Activated CD4-positive, alpha-beta T cell treated with anti-CD3 and anti-CD28 coated beads for 36 hours (primary cell): ENCODE measurements at regions of chr12 and their contacts with region 1.

Region 1: DNA sequence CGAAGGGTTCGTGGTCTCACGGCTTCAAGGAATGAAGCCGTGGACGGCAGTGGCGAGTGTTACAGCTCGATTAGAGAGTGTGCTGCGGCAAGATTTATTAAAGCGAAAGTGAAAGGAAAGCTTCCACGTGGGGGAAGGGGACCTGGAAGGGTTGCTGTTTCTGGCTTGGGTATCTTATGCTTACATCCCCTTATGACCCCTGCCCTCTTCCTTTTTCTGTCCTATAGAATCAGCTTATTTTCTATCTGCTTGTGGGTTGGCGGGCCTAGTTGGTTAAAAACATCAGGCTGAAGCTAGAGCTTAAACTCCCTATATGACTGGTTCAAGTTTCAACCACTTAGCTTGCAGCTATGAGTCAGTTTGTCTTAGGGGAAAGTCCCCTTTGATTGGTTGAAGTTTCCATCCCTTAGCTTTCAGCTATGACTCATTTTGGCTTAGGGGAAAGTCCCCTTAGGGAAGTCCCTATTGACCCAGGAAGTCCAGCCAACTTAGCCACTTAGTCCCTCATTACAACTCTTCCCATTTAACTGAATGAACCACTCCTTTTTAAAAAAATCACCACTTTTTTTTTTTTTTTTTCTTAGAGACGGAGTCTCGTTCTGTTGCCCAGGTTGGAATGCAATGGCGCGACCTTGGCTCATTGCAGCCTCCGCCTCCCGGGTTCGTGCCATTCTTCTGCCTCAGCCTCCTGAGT is 1494.7 kb upstream of the TMEM132C start:
- DNase-seq: peak; percentile 69
- ATAC-seq: peak; percentile 76
- H3K4me3 Mint-ChIP-seq: peak overlapping the region; percentile 73
- H3K27ac Mint-ChIP-seq: peak overlapping the region; percentile 98
- H3K4me1 Mint-ChIP-seq: peaks cover 31% of the 10 kb centered on the region
- H3K27me3 Mint-ChIP-seq: peaks cover 5% of the 10 kb centered on the region

Region 2: GRCh38 chr12:126483145-126484068 is 288.9 kb before region 1 on chr12:
- CTCF ChIA-PET with region 1: no interaction called
- POLR2A ChIA-PET with region 1: no interaction called
- intact Hi-C with region 1: loop called in 1 of 2 experiments (anchors 5 kb)
- DNase-seq: no peak
- ATAC-seq: peak; percentile 42
- H3K4me3 Mint-ChIP-seq: no peak overlapping the region
- H3K27ac Mint-ChIP-seq: no peak overlapping the region
- H3K4me1 Mint-ChIP-seq: peaks cover 9% of the 10 kb centered on the region
- H3K27me3 Mint-ChIP-seq: no peaks in the 10 kb centered on the region

Region 3: GRCh38 chr12:126588586-126589249 is 183.6 kb before region 1 on chr12:
- CTCF ChIA-PET with region 1: no interaction called
- POLR2A ChIA-PET with region 1: no interaction called
- intact Hi-C with region 1: loop called in 1 of 2 experiments (anchors 2 kb)
- DNase-seq: peak; percentile 53
- ATAC-seq: peak; percentile 89
- H3K4me3 Mint-ChIP-seq: peak overlapping the region; percentile 34
- H3K27ac Mint-ChIP-seq: peak overlapping the region; percentile 73
- H3K4me1 Mint-ChIP-seq: peaks cover 29% of the 10 kb centered on the region
- H3K27me3 Mint-ChIP-seq: peaks cover 2% of the 10 kb centered on the region

Region 4: GRCh38 chr12:126708492-126708896 is 63.8 kb before region 1 on chr12:
- CTCF ChIA-PET with region 1: no interaction called
- POLR2A ChIA-PET with region 1: interaction called, 3 read pairs
- intact Hi-C with region 1: loop called in 1 of 2 experiments (anchors 1 kb)
- DNase-seq: peak; percentile 44
- ATAC-seq: peak; percentile 95
- H3K4me3 Mint-ChIP-seq: no peak overlapping the region
- H3K27ac Mint-ChIP-seq: no peak overlapping the region
- H3K4me1 Mint-ChIP-seq: peaks cover 9% of the 10 kb centered on the region
- H3K27me3 Mint-ChIP-seq: peaks cover 4% of the 10 kb centered on the region

Region 5: GRCh38 chr12:126761420-126761819 is 10.9 kb before region 1 on chr12:
- CTCF ChIA-PET with region 1: no interaction called
- POLR2A ChIA-PET with region 1: interaction called, 3 read pairs
- intact Hi-C with region 1: loop called (anchors 1 kb)
- DNase-seq: no peak
- ATAC-seq: peak; percentile 88
- H3K4me3 Mint-ChIP-seq: no peak overlapping the region
- H3K27ac Mint-ChIP-seq: peak overlapping the region; percentile 82
- H3K4me1 Mint-ChIP-seq: peaks cover 30% of the 10 kb centered on the region
- H3K27me3 Mint-ChIP-seq: no peaks in the 10 kb centered on the region

Region 6: DNA sequence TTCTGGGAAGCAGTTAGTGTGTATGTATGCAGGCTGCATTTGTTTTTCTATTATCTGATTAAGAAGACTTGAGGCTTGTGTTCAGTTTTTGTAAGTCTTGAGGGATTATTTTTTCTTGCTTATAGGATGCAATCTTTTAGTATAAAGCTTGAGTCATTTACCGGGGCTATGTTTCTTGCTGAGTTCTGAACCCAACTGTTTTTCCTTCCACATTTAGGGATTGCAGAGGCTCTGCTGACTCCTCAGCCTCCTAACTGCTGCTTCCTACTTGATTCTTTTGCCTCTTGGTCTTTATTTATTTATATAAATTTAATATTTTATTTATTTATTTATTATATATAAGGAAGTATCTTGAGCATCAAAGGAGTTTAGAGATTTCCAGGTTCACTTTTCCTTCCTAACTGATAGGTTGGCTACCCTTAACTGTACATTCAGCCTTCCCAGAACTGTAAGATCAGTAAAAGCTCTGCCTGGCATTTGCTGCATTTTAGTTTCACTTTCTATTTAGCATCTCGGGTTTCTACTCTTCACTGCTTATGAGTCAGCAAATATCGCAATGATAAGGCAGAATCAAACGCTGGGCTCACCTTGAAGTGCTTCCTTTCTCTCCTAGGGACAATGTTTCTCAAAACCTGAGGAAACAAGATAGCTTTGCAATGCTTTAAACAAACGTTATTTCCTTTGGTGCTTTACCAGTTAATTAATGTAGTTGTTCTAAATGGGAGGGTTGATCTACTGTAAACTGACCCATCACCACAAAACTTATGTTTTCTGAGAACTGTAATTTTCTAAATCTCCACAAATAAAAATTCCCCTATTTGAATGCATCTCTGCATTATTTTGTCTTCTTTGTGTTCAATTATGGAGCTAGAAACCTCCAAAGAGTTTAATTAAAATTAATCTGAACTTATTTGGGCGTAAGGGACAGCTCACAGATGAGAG is 311.0 kb after region 1 on chr12:
- CTCF ChIA-PET with region 1: no interaction called
- POLR2A ChIA-PET with region 1: interaction called, 9 read pairs
- intact Hi-C with region 1: loop called in 1 of 2 experiments (anchors 5 kb)
- DNase-seq: peak; percentile 11
- ATAC-seq: peak; percentile 95
- H3K4me3 Mint-ChIP-seq: no peak overlapping the region
- H3K27ac Mint-ChIP-seq: peak overlapping the region; percentile 53
- H3K4me1 Mint-ChIP-seq: peaks cover 8% of the 10 kb centered on the region
- H3K27me3 Mint-ChIP-seq: peaks cover 2% of the 10 kb centered on the region

Region 7: GRCh38 chr12:127125607-127126259 is 353.4 kb after region 1 on chr12:
- CTCF ChIA-PET with region 1: no interaction called
- POLR2A ChIA-PET with region 1: no interaction called
- intact Hi-C with region 1: loop called in 1 of 2 experiments (anchors 2 kb)
- DNase-seq: peak; percentile 72
- ATAC-seq: peak; percentile 91
- H3K4me3 Mint-ChIP-seq: no peak overlapping the region
- H3K27ac Mint-ChIP-seq: peak overlapping the region; percentile 17
- H3K4me1 Mint-ChIP-seq: peaks cover 7% of the 10 kb centered on the region
- H3K27me3 Mint-ChIP-seq: peaks cover 5% of the 10 kb centered on the region